Thyroid gland (tissue), 4 donors: ENCODE measurements at regions of chr5 and their contacts with region 1.

Region 1: GRCh38 chr5:54243473-54244080 is 66.8 kb downstream of the ARL15 start:
- DNase-seq: peak; percentile 29 to 33
- H3K4me3 ChIP-seq: no peak overlapping the region
- H3K27ac ChIP-seq: no peak overlapping the region
- H3K4me1 ChIP-seq: no peaks in the 10 kb centered on the region
- H3K27me3 ChIP-seq: no peaks in the 10 kb centered on the region
- CTCF ChIP-seq: peak; percentile 49 to 75 (median 63)
- POLR2A ChIP-seq: no peak

Region 2: DNA sequence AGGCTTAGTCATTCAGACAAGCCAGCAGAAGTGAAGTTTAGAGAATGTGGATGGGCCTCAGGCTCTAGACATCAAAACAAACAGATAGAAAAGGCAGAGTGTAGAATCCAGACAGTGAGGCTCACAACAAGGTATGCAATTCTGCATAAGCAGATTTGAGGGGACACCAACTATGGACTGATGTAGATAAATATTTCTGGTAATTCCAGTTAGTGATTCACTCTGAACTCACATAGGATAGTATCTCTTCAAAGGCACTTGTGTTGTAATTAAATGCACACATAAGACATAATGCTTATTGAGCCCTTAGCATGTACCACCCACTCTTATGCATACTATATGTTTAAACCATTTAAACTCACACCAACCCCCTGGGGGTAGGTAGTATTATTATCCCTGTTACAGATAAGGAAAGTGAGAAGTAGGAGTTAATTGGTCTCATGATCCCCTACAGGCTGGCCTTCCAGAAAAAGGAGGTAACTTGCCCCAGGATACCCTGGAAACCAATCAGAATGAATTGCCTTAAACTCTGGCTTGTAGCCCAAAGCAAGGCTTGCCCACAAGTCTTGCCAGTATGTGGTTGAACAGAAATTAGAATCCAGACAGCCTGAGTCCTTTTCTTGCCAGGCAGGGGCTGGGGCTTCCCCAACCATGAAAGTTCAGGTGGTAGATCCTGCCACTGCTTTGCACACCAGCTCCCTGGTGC is 172.5 kb after region 1 on chr5:
- intact Hi-C with region 1: loop called (anchors 5 kb)
- DNase-seq: no peak
- H3K4me3 ChIP-seq: no peak overlapping the region
- H3K27ac ChIP-seq: no peak overlapping the region
- H3K4me1 ChIP-seq: no peaks in the 10 kb centered on the region
- H3K27me3 ChIP-seq: no peaks in the 10 kb centered on the region
- CTCF ChIP-seq: no peak
- POLR2A ChIP-seq: no peak

Region 3: DNA sequence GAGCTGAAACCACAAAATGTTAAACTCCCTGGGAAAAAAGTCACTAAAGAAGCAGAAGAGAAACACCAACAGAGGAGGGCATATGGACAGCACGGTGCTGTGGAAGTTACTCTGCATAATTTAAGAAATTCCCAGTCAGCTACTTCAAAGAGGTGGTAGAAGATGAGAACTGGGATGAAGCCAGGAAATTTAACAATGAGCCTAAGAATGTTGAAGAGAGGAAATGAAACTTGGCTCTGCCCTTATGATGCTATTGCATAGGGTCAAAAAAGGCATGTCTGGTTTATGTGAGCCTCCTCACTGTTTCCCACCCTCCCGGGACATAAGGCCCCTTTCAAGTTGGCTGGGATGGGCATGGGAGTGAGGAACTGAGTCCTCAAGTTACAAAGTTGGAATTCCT is 248.6 kb after region 1 on chr5:
- intact Hi-C with region 1: loop called (anchors 10 kb)
- DNase-seq: no peak
- H3K4me3 ChIP-seq: no peak overlapping the region
- H3K27ac ChIP-seq: no peak overlapping the region
- H3K4me1 ChIP-seq: no peaks in the 10 kb centered on the region
- H3K27me3 ChIP-seq: no peaks in the 10 kb centered on the region
- CTCF ChIP-seq: no peak
- POLR2A ChIP-seq: no peak